ENCODE measurements at regions of chr6 and their contacts with region 1.

Region 1: DNA sequence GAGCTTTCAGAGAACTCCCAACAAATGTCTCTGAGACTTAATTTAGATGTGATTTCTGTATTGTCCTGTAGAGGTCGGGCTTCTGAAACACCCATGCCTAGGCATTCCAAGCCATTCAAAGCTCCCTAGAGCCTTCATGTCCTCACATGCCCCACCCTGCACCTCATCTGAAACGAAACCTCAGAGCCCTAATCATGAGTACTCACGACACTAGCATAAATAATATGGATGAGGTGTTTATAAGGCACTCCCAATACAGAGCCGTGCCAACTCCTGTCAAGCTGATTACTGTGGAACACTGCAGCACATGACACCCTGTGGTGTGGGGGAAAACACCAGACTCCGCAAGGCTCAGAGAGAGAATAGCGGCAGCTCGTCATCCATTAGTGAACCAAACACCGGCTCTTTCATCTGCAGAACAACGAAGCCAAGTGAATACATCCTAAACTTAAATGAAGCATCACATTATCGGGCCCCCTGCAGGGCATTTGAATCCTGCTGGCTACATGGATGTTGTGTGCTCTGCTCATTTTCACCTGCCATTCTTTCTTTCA is 83.8 kb downstream of the FNDC1 start:
- DNase-seq: no peak
- ATAC-seq: peak; percentile 36 to 82 (median 76)
- H3K4me3 ChIP-seq: no peak overlapping the region
- H3K27ac ChIP-seq: no peak overlapping the region
- H3K4me1 ChIP-seq: peaks cover 3% of the 10 kb centered on the region
- H3K27me3 ChIP-seq: no peaks in the 10 kb centered on the region
- CTCF ChIP-seq: peak; percentile 43

Region 2: DNA sequence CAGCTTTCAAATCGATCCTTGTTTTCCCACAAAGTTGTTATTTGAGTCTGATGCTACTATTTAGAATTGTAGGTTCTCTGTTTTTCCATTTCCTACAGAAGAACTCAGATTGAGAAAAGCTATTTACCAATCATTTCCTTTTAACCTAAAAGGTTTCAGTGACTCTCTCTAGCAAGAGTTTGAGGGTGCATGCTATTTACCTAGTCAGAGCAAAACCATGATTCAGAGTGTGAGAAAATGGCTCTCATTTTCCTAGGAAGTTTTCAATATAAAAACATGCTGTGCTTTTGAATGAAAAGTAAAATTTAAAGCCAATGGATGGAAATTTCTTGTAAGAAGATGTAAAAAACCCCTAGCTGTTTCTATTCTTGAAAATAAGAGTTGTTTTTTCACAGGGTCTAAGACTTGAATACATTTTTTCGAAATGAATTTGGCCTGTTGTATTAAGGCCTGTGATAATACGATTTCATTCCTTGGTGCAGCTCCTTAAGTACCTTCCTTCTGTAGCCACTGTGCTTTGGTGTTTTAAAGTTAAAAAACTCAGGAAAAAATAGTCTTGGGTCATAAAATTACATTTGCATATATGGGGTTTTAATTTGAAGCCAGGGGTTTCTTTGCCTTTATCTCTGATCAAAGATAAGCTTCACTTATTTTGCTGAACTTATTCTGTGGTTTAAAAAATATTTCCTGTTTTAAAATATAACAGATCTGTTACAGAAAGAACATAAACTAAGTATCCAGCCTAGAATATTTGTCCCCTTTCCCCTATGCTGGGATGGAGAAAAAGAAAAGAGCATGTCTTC is 235.1 kb before region 1 on chr6:
- intact Hi-C with region 1: no loop called
- DNase-seq: no peak
- ATAC-seq: no peak
- H3K4me3 ChIP-seq: no peak overlapping the region
- H3K27ac ChIP-seq: no peak overlapping the region
- H3K4me1 ChIP-seq: no peaks in the 10 kb centered on the region
- H3K27me3 ChIP-seq: no peaks in the 10 kb centered on the region
- CTCF ChIP-seq: no peak

Region 3: GRCh38 chr6:159654483-159655098 is 401.6 kb after region 1 on chr6:
- intact Hi-C with region 1: loop called in 1 of 2 experiments (anchors 10 kb)
- DNase-seq: no peak
- ATAC-seq: peak in 3 of 4 donors; percentile 31 to 49 (median 41)
- H3K4me3 ChIP-seq: no peak overlapping the region
- H3K27ac ChIP-seq: no peak overlapping the region
- H3K4me1 ChIP-seq: no peaks in the 10 kb centered on the region
- H3K27me3 ChIP-seq: no peaks in the 10 kb centered on the region
- CTCF ChIP-seq: peak; percentile 68

Region 4: GRCh38 chr6:159941286-159942113 is 688.5 kb after region 1 on chr6:
- intact Hi-C with region 1: loop called in 1 of 2 experiments (anchors 10 kb)
- DNase-seq: no peak
- ATAC-seq: peak; percentile 61 to 83 (median 66)
- H3K4me3 ChIP-seq: no peak overlapping the region
- H3K27ac ChIP-seq: no peak overlapping the region
- H3K4me1 ChIP-seq: peaks cover 13% of the 10 kb centered on the region
- H3K27me3 ChIP-seq: no peaks in the 10 kb centered on the region
- CTCF ChIP-seq: peak; percentile 59

Measured in psoas muscle (tissue), 8 donors.